Right cardiac atrium (tissue), 5 donors: ENCODE measurements at regions of chr20 and their contacts with region 1.

Region 1: GRCh38 chr20:53547664-53548239 is 45.9 kb downstream of the ZNF217 start:
- DNase-seq: no peak
- ATAC-seq: peak; percentile 64 to 65
- H3K4me3 ChIP-seq: no peak overlapping the region
- H3K27ac ChIP-seq: no peak overlapping the region
- H3K4me1 ChIP-seq: no peaks in the 10 kb centered on the region
- H3K27me3 ChIP-seq: no peaks in the 10 kb centered on the region

Region 2: GRCh38 chr20:52305858-52306257 is 1241.9 kb before region 1 on chr20:
- intact Hi-C with region 1: loop called in 1 of 4 experiments (anchors 5 kb)
- DNase-seq: no peak
- ATAC-seq: no peak
- H3K4me3 ChIP-seq: no peak overlapping the region
- H3K27ac ChIP-seq: no peak overlapping the region
- H3K4me1 ChIP-seq: no peaks in the 10 kb centered on the region
- H3K27me3 ChIP-seq: no peaks in the 10 kb centered on the region

Region 3: GRCh38 chr20:53773792-53774401 is 226.1 kb after region 1 on chr20:
- intact Hi-C with region 1: no loop called
- DNase-seq: no peak
- ATAC-seq: peak; percentile 62 to 70
- H3K4me3 ChIP-seq: no peak overlapping the region
- H3K27ac ChIP-seq: no peak overlapping the region
- H3K4me1 ChIP-seq: peaks cover 2% of the 10 kb centered on the region
- H3K27me3 ChIP-seq: no peaks in the 10 kb centered on the region